Esophagus muscularis mucosa (tissue), 4 donors: ENCODE measurements at regions of chr7 and their contacts with region 1.

Region 1: DNA sequence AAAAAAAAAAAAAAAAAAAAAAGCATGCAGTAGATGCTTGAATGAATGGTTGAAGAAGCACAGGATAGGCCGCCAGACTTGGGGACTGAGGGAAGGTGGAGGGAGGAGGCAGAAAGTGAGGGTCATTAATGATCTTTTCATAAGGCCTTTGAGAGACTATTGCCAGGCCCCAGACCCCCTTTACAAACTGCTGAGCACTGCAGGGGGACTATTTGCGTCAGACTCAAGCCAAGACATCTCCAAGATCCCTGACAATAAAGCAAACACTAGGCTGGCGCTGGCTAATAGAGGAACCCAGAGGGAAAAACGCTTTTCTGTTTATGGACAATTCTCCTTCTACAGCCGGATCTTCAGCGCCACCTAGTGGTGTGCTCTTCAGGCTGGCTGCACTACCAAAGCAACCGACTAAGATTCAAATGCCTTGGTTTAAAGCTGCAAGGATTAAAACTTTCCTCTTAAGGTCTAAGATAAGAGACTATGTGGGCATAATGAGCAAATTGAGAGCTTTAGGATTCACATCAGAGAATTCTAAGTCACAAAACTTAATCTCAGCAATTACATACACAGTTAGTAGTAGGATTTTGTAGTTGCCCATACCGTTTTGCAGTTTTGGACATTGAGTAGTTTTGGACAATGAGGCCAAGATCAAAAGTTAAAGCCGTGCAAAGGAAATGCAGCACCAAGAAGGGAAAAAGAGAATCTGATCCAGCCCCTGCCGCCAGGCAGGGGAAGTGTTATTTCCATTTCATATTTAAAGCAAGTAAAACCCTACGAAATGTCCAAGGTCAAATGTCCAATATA is 17.9 kb upstream of the AGK start:
- DNase-seq: no peak
- H3K4me3 ChIP-seq: no peak overlapping the region
- H3K27ac ChIP-seq: no peak overlapping the region
- H3K4me1 ChIP-seq: peaks cover 0 to 9% (median 4%) of the 10 kb centered on the region in 4 donors
- H3K27me3 ChIP-seq: peaks cover 0 to 6% (median 0%) of the 10 kb centered on the region in 4 donors
- CTCF ChIP-seq: peak; percentile 78 to 96 (median 93)
- EP300 ChIP-seq: no peak
- POLR2A ChIP-seq: no peak

Region 2: DNA sequence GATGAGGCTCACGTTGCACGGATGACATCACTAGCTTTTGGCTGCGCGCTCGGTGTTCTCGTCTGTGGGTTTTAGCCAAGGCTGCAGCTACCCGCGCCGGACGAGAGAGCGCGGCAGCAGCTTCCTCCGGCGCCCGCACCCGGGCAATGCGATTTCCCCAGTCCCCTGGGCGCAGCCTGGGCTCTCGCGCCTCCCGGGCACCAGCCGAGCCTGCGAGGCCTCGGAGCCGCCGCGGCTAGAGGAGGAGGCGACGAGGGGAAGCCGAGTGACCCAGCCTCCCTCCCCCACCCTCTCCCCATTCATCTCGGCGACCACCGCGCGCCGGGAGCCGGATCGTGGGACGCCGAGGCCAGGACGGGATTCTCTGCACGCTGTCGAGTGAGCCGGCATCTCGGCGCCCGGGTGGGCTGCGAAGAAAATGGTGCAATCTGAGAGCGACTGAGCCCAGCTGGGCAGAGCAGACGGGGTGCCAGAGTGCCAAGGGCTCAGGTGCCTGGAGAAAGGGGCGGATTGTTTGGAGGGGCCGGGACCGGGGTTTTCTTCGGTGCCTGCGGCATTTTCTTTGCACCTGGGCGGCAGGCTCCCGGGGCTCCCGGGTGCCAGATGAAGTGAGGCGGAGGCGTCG is 460.7 kb before region 1 on chr7:
- intact Hi-C with region 1: loop called (anchors 10 kb)
- DNase-seq: no peak
- H3K4me3 ChIP-seq: peak overlapping the region; percentile 59 to 68 (median 62)
- H3K27ac ChIP-seq: peak overlapping the region in 3 of 4 donors; percentile 51 to 78 (median 53)
- H3K4me1 ChIP-seq: peaks cover 21 to 46% (median 43%) of the 10 kb centered on the region in 4 donors
- H3K27me3 ChIP-seq: peaks cover 0 to 72% (median 16%) of the 10 kb centered on the region in 4 donors
- CTCF ChIP-seq: no peak
- EP300 ChIP-seq: no peak
- POLR2A ChIP-seq: no peak

Region 3: GRCh38 chr7:141460781-141461715 is 72.3 kb before region 1 on chr7:
- intact Hi-C with region 1: no loop called
- DNase-seq: no peak
- H3K4me3 ChIP-seq: no peak overlapping the region
- H3K27ac ChIP-seq: no peak overlapping the region
- H3K4me1 ChIP-seq: peaks cover 0 to 11% (median 9%) of the 10 kb centered on the region in 4 donors
- H3K27me3 ChIP-seq: no peaks in the 10 kb centered on the region
- CTCF ChIP-seq: no peak
- EP300 ChIP-seq: no peak
- POLR2A ChIP-seq: no peak